Psoas muscle (tissue), 8 donors: ENCODE measurements at regions of chr13 and their contacts with region 1.

Region 1: DNA sequence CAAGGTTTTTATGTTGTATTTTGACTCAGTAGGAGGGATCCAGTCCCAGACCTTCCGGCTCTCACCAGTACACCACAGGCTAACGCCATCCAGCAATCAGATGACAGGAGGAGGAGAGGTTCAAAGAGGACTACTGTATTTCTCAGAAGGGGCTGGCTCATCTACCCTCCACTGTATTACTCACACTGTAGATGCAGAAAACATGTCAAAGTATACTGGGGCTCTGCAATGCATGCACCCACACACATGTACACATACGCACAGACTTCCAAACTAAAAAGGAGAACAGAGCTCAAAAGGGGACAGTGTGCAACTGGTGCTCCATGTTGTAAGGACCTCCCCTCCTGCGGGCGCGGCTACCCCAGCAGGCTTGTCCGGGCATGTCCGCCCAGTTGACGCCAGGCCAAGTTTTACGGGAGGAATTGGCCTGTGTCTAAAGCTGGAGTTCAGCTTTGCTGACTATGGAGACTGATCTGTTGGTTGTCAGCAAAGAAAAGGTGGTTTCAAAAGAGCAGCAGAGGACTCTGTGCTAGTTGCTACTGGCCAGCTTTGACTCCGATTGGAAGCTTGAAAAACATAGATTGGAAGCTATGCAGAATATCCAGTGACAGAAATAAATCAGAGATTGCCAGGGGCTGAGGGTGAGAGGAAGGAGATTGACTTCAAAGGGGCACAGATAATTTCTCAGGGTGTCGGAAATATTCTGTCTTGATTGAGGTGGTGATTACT is 314.2 kb downstream of the DLEU7 start:
- DNase-seq: peak; percentile 86 to 90
- ATAC-seq: peak; percentile 84 to 91 (median 90)
- H3K4me3 ChIP-seq: peak overlapping the region; percentile 54
- H3K27ac ChIP-seq: peak overlapping the region; percentile 94
- H3K4me1 ChIP-seq: peaks cover 48% of the 10 kb centered on the region
- H3K27me3 ChIP-seq: no peaks in the 10 kb centered on the region
- CTCF ChIP-seq: no peak

Region 2: GRCh38 chr13:50081679-50082425 is 447.5 kb before region 1 on chr13:
- intact Hi-C with region 1: loop called (anchors 5 to 10 kb)
- DNase-seq: peak; percentile 98 to 99
- ATAC-seq: peak; percentile 93 to 96 (median 95)
- H3K4me3 ChIP-seq: peak overlapping the region; percentile 77
- H3K27ac ChIP-seq: peak overlapping the region; percentile 87
- H3K4me1 ChIP-seq: peaks cover 44% of the 10 kb centered on the region
- H3K27me3 ChIP-seq: no peaks in the 10 kb centered on the region
- CTCF ChIP-seq: no peak

Region 3: DNA sequence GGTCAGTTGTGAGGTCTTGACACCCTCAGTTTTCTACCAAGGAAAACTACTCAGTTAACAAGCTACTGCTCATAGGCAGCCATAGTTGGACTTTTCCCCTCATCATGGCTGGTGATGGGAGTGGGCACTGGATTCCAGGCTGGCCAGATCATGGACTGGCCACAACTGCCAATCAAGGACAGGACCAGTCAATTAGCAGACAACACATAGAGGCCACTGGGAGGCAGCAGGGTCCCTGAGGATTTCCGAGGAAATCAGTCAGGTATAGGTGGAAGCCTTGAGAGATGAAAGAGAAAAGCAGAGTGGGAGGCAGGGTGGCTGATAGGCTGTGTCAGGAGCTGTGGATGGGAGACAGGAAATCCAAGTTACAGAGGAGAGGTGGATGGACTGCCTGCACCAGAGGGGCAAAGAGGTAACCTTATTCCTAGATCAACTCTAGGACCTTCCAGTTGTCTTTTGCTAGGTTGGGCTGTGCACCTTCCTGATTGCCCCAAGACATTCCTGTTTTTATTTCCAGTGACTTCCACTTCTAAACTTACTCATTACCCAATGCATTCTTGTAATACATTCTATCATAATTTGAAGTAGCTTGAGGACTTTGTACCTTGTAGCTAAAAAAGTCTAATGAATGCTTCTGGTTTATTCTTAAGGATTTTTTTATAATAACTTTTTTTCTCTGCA is 152.3 kb before region 1 on chr13:
- intact Hi-C with region 1: loop called (anchors 5 kb)
- DNase-seq: peak in 1 of 2 donors; percentile 58
- ATAC-seq: peak; percentile 21 to 88 (median 85)
- H3K4me3 ChIP-seq: no peak overlapping the region
- H3K27ac ChIP-seq: peak overlapping the region; percentile 39
- H3K4me1 ChIP-seq: peaks cover 23% of the 10 kb centered on the region
- H3K27me3 ChIP-seq: no peaks in the 10 kb centered on the region
- CTCF ChIP-seq: peak; percentile 32

Region 4: DNA sequence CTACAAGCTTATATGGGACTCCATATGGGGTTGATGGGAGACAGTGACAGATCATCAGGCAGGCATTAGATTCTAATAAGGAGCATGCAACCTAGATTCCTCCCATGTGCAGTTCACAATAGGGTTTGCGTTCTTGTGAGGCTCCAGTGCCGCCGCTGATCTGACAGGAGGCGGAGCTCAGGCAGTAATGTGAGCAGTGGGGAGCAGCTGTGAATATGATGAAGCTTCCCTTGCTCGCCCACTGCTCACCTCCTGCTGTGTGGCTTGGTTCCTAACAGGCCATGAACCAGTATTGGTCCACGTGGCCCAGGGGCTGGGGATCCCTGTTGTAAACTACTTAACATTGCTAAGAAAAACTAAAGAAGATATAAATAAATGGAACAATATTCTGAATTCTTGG is 135.7 kb before region 1 on chr13:
- intact Hi-C with region 1: loop called in 1 of 2 experiments (anchors 1 kb)
- DNase-seq: no peak
- ATAC-seq: peak; percentile 75 to 87 (median 79)
- H3K4me3 ChIP-seq: peak overlapping the region; percentile 51
- H3K27ac ChIP-seq: peak overlapping the region; percentile 76
- H3K4me1 ChIP-seq: peaks cover 15% of the 10 kb centered on the region
- H3K27me3 ChIP-seq: no peaks in the 10 kb centered on the region
- CTCF ChIP-seq: no peak

Region 5: GRCh38 chr13:50428183-50428877 is 101.0 kb before region 1 on chr13:
- intact Hi-C with region 1: loop called in 1 of 2 experiments (anchors 2 kb)
- DNase-seq: no peak
- ATAC-seq: peak; percentile 69 to 87 (median 81)
- H3K4me3 ChIP-seq: no peak overlapping the region
- H3K27ac ChIP-seq: peak overlapping the region; percentile 83
- H3K4me1 ChIP-seq: peaks cover 43% of the 10 kb centered on the region
- H3K27me3 ChIP-seq: no peaks in the 10 kb centered on the region
- CTCF ChIP-seq: no peak

Region 6: GRCh38 chr13:50485979-50486935 is 43.1 kb before region 1 on chr13:
- intact Hi-C with region 1: no loop called
- DNase-seq: no peak
- ATAC-seq: peak; percentile 62 to 98 (median 83)
- H3K4me3 ChIP-seq: peak overlapping the region; percentile 35
- H3K27ac ChIP-seq: peak overlapping the region; percentile 11
- H3K4me1 ChIP-seq: peaks cover 9% of the 10 kb centered on the region
- H3K27me3 ChIP-seq: no peaks in the 10 kb centered on the region
- CTCF ChIP-seq: no peak

Region 7: GRCh38 chr13:51025245-51025905 is 496.1 kb after region 1 on chr13:
- intact Hi-C with region 1: no loop called
- DNase-seq: no peak
- ATAC-seq: no peak
- H3K4me3 ChIP-seq: no peak overlapping the region
- H3K27ac ChIP-seq: no peak overlapping the region
- H3K4me1 ChIP-seq: no peaks in the 10 kb centered on the region
- H3K27me3 ChIP-seq: no peaks in the 10 kb centered on the region
- CTCF ChIP-seq: no peak